ENCODE measurements at regions of chr17 and their contacts with region 1.

Region 1: DNA sequence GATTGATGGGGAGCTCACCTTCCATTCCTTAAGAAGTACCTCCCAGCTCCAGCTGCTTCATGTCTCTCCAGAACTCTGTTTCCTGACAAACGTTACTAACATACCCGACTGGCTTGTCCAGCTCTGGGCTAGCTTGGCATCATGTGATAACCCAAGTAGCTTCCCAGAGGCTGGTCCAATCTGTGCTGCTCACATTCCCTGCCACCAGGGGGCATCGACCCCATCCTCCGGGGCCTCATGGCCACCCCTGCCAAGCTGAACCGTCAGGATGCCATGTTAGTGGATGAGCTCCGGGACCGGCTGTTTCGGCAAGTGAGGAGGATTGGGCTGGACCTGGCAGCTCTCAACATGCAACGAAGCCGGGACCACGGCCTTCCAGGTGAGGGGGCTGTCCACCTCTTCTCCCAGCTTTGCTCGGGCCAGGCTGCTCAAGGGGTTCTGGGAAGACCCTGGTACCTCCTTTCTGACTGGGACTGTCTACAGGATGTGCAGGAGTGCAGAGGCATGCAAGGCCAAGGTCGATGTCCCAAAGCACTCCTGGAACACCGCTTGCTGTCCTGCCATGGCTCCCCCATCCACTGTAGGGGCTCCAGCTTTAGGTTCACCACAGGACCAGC is 7.6 kb downstream of the EPX start:
- DNase-seq: peak; percentile 67
- H3K4me3 Mint-ChIP-seq: no peak overlapping the region
- H3K27ac Mint-ChIP-seq: no peak overlapping the region
- H3K4me1 Mint-ChIP-seq: no peaks in the 10 kb centered on the region
- H3K27me3 Mint-ChIP-seq: no peaks in the 10 kb centered on the region

Region 2: DNA sequence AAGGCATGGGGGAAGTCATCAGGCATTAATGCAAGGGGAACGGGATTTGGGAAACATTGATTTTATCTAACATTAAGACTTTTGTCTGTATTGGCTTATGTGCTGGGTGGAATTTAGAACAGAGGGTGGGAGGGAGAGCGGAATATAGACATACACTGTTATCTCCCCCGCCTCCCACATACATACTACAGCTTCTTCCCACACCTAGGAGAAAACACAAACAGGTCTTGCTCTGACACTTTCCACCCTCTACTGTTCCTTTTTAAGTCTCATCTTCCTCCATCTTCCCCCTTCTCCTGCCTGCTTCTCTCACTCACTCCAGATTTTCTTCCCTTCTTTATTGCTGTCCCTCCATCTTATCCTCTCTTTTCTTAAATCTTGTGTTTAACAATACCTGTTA is 51.5 kb before region 1 on chr17:
- CTCF ChIA-PET with region 1: no interaction called
- intact Hi-C with region 1: no loop called
- DNase-seq: no peak
- H3K4me3 Mint-ChIP-seq: no peak overlapping the region
- H3K27ac Mint-ChIP-seq: no peak overlapping the region
- H3K4me1 Mint-ChIP-seq: peaks cover 25% of the 10 kb centered on the region
- H3K27me3 Mint-ChIP-seq: no peaks in the 10 kb centered on the region

Region 3: DNA sequence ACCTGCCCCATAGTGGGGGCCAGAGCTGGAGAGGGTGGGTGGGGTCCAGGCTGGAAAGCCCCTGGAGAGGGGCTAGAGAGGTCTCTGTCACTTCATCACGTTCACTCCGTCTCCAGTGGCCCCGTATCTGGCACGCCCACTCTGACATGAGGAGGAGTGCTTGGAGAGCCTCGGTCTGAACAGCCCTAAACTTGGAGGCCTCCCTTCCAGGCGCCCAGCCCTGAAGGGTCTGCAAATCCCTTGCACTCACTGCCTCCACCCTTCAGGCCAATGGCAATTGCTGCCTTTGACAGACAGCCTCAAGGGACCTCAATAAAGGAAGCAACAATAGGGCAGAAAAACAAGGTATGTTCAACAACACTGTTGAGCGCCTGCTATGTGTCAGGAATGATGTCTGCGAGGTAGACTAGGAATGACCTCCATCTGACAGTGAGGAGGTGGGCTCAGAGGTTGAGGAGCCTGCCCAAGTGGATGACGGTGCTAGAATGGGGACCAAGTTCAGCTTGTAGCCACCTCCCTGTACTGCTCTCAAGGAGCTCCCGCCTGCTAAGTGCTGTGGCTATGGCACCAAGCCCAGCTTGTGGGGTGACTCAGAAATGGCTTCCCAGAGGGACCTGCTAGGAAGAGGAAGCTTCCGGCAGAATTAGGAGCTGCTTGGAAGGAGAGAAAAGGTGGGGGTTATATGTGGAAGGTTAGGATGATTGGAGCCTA is 10.5 kb before region 1 on chr17:
- CTCF ChIA-PET with region 1: interaction called, 11 read pairs
- intact Hi-C with region 1: no loop called
- DNase-seq: no peak
- H3K4me3 Mint-ChIP-seq: no peak overlapping the region
- H3K27ac Mint-ChIP-seq: peak overlapping the region; percentile 36
- H3K4me1 Mint-ChIP-seq: no peaks in the 10 kb centered on the region
- H3K27me3 Mint-ChIP-seq: no peaks in the 10 kb centered on the region

Region 4: DNA sequence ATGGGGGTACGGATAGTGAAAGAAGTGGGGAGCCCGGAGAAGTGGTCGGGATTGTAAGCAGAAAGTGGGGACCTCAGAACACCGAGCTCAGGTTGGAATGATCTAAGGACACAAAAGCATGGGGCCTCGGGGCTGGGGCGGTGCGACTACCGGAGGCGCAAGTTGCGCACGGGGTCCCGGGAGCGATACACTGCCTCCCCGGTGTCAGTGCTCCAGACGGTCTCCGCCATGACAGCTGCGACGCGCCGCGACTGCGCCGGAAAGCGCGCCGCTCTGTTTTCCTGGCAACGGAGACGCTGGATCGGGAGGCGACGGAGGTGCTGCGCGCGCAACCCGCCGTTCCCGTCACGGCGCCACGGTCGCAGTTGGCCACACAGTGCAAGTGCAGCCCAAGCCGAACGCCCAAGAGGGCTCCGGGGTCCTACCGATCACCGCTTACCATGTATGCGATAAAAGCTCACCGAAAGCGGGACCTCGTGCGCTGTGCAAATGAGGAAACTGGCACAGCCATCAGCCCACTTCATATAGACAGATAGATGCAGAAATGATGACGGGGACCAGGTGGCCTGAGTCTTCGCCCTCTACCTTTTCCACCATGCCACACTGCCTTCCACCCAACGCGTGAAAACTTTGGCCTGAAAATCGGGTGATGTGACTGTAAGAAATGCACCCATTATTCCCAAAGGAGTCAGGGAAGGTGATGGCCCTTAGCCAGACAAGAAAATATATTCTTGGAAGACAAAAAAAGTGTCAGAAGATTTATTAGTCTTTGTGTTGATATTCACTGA is 19.1 kb after region 1 on chr17 and contains the start of gene MKS1:
- CTCF ChIA-PET with region 1: interaction called, 23 read pairs
- intact Hi-C with region 1: no loop called
- DNase-seq: peak; percentile 97
- H3K4me3 Mint-ChIP-seq: peak within 1 kb of the TSS; percentile 82
- H3K27ac Mint-ChIP-seq: peak within 1 kb of the TSS; percentile 92
- H3K4me1 Mint-ChIP-seq: peaks cover 25% of the 10 kb centered on the region
- H3K27me3 Mint-ChIP-seq: no peaks in the 10 kb centered on the region
- total RNA-seq, gene MKS1: 27.1 to 29.2 TPM

Region 5: DNA sequence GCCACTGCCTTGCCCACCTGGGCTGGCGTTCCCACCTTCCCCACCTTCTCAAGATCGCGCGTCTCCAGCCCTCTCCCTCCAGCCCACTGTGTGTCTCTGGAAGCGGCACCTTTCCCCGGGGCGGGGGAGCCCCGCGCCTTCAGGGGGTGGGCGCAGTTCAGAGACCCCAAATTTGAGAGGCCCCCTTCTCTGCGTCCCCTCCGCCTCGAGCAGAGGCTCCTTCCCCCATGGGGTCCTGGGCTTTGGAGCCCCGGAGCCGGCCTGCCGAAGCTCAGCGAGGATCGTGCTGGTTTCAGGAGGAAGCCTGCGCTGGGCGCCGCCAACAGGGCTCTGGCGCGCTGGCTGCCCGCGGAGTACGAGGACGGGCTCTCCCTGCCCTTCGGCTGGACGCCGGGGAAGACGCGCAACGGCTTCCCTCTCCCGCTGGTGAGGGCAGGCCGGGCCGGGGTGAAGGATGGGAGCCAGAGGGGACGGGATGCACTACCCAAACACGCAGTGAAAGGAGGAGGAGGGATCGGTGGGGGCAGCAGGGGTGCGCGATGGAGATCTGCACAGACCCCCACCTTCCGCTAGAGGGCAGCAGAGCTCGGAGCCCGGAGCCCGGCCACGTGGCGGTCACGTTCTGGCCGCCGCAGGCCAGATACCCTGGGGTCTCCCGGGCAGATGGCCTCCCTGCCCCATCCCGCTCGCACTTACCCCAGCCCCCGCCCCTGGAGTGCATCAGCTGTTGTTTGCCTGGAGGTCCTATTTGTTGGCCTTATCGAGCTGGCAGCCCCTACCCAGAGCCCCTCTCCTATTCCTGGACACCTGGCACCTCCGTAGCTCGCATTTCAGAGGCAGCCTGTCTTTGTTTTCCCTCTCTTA is 49.4 kb after region 1 on chr17:
- CTCF ChIA-PET with region 1: interaction called, 13 read pairs
- intact Hi-C with region 1: loop called (anchors 5 kb)
- DNase-seq: peak; percentile 82
- H3K4me3 Mint-ChIP-seq: peak overlapping the region; percentile 72
- H3K27ac Mint-ChIP-seq: no peak overlapping the region
- H3K4me1 Mint-ChIP-seq: peaks cover 11% of the 10 kb centered on the region
- H3K27me3 Mint-ChIP-seq: peaks cover 3% of the 10 kb centered on the region

Region 6: DNA sequence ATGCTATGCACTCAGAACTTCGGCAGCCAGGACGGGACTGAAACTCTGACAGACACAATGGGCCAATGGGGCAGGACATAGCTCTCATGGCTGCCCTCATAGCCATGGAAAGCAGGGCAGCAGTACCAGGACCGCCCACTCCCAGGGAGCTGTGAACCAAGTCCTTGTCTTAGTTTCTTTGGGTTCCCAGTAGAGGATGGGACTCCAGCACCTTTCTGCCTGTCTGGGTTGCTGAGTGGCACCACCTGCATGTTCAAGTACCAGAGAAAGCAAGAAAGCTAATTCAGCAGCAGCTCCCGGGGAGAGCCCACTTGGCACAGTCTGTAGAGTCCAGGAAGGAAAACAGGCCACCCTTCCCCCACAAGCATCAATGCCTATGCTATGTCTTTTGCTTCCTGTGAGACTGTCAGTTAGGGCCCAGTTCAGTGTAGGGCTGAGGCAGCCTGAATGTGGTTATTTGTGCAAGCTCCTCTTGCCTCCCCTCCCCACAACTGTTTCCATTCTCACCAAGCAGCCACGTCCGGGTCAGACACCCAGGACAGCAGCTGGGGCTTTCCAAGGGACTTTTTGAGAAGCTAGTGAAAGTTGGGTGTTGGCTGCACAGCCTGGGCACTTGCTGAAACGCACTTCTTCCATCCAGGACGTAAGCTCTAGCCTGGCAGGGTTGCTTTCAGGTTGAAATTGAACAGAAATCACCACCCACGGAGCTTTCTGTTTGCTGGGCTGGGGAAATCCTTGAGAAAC is 144.1 kb after region 1 on chr17:
- CTCF ChIA-PET with region 1: no interaction called
- intact Hi-C with region 1: no loop called
- DNase-seq: peak; percentile 98
- H3K4me3 Mint-ChIP-seq: peak overlapping the region; percentile 92
- H3K27ac Mint-ChIP-seq: peak overlapping the region; percentile 99
- H3K4me1 Mint-ChIP-seq: peaks cover 60% of the 10 kb centered on the region
- H3K27me3 Mint-ChIP-seq: no peaks in the 10 kb centered on the region

Region 7: GRCh38 chr17:58447039-58447975 is 247.2 kb after region 1 on chr17:
- CTCF ChIA-PET with region 1: no interaction called
- intact Hi-C with region 1: loop called (anchors 5 kb)
- DNase-seq: peak; percentile 86
- H3K4me3 Mint-ChIP-seq: no peak overlapping the region
- H3K27ac Mint-ChIP-seq: no peak overlapping the region
- H3K4me1 Mint-ChIP-seq: peaks cover 1% of the 10 kb centered on the region
- H3K27me3 Mint-ChIP-seq: no peaks in the 10 kb centered on the region